Endothelial cell of umbilical vein (primary cell): ENCODE measurements at regions of chrX and their contacts with region 1.

Region 1: GRCh38 chrX:153032397-153033118 is 23.7 kb upstream of the PNMA3 start:
- DNase-seq: peak; percentile 56
- H3K4me3 ChIP-seq: peak overlapping the region in 2 of 3 experiments; percentile 20 to 27
- H3K27ac ChIP-seq: no peak overlapping the region
- H3K4me1 ChIP-seq: no peaks in the 10 kb centered on the region
- H3K27me3 ChIP-seq: no peaks in the 10 kb centered on the region
- CTCF ChIP-seq: peak; percentile 69 to 83
- POLR2A ChIP-seq: no peak

Region 2: DNA sequence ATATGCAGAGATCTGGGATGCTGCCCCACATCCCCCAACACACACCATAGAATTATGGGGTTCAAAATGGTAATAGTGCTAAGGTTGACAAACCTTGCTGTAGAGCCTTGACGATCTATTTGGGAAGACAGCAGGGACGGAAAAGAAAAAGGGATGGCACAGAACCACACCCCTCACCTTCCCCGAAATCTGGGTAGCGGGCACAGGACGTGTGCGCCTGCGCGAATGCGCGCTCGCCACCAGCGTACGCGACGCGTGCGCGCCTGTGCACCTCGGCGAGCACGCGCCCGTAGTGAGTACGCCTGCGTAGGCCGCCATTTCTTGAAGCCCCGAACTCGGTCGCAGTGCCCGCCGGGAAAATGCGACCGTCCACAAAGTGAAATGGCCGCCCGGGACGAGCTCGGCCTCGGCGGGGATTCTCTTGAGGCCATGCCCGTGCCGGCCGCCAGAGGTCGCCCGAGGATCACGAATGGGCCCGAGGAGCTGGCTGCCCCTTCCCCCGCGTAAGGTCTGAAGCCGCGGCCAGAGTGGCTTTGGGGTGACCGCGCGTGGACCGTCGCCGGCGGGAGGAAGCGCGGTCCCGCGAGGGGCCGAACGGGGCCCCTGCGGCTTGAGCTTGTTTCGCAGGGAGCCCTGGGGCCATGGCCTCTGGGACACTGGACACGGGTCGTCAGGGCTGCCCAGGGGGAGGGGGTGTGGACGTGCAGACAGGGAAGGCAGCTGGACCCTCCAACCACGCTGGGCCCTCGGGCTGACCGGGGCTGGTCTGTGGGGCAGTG is 91.0 kb before region 1 on chrX:
- CTCF ChIA-PET with region 1: interaction called, 14 read pairs
- POLR2A ChIA-PET with region 1: no interaction called
- dilution Hi-C with region 1: no loop called
- intact Hi-C with region 1: loop called (anchors 1 kb)
- DNase-seq: peak; percentile 91
- H3K4me3 ChIP-seq: peak overlapping the region; percentile 28 to 74 (median 62)
- H3K27ac ChIP-seq: peak overlapping the region; percentile 46
- H3K4me1 ChIP-seq: peaks cover 13% of the 10 kb centered on the region
- H3K27me3 ChIP-seq: no peaks in the 10 kb centered on the region
- CTCF ChIP-seq: peak; percentile 64 to 81
- POLR2A ChIP-seq: peak; percentile 75

Region 3: DNA sequence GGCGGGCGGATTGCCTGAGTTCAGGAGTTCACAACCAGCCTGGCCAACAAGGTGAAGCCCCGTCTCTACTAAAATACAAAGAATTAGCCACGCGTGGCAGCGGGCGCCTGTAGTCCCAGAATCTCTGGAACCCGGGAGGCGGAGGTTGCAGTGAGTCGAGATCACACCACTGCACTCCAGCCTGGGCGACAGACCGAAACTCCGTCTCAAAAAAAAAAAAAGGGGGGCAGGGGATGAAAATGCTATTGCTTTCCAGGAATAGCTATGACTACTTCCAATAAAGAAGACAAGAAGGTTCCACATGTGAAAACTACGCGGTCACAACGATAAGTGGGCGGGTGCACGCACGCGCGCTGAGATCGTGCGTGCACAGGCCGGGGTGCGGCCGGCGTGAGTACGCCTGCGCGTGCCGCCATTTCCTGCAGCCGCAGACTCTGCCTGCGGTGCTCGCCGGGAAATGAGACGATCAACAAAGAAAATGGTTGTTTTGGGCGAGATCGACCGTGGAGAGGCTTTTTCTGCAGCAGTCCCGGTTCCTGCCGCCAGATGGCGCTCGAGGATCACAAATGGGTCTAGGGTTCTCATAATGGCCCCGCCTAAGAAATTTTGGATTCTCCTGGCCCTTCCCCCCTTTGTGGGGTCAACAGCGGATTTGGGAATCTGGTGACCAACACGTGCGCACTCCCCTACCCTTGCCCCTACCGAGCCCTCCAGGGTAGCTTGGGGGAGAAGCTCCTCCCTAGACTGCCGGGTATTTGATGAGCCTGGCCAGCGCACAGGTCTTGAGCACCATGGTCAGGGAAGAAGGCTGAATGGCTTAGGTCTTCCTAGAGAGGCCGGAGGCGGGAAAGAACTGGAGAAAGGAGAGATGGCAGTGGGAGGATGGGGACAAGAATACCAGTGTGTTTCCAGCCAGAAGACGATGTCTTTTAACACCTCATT is 73.8 kb before region 1 on chrX:
- CTCF ChIA-PET with region 1: no interaction called
- POLR2A ChIA-PET with region 1: no interaction called
- dilution Hi-C with region 1: no loop called
- intact Hi-C with region 1: loop called (anchors 1 kb)
- DNase-seq: peak; percentile 89
- H3K4me3 ChIP-seq: peak overlapping the region in 1 of 3 experiments; percentile 9
- H3K27ac ChIP-seq: peak overlapping the region; percentile 9
- H3K4me1 ChIP-seq: no peaks in the 10 kb centered on the region
- H3K27me3 ChIP-seq: no peaks in the 10 kb centered on the region
- CTCF ChIP-seq: peak; percentile 70 to 71
- POLR2A ChIP-seq: peak; percentile 60

Region 4: DNA sequence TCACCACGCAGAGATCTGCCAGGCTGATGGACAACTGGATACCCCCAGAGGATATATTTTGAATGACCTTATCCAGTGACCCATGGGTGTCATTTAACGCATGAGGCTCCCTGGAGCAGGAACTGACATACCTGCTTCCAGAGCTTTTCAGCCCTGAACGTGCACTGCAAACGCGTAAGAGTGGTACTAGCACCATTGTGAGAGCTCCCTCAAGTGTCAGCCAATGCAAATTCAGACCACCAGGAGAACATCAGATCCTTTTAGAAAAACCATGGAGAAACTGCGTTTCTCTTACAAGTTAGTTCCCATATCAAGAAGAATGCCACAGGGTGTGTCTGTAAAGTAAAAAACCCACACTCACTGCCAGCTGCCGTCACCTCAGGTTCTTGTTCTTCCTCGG is 406.0 kb after region 1 on chrX:
- CTCF ChIA-PET with region 1: interaction called, 14 read pairs
- POLR2A ChIA-PET with region 1: no interaction called
- dilution Hi-C with region 1: no loop called
- intact Hi-C with region 1: loop called (anchors 10 kb)
- DNase-seq: peak; percentile 16
- H3K4me3 ChIP-seq: no peak overlapping the region
- H3K27ac ChIP-seq: no peak overlapping the region
- H3K4me1 ChIP-seq: no peaks in the 10 kb centered on the region
- H3K27me3 ChIP-seq: no peaks in the 10 kb centered on the region
- CTCF ChIP-seq: peak; percentile 5 to 16
- POLR2A ChIP-seq: no peak

Region 5: DNA sequence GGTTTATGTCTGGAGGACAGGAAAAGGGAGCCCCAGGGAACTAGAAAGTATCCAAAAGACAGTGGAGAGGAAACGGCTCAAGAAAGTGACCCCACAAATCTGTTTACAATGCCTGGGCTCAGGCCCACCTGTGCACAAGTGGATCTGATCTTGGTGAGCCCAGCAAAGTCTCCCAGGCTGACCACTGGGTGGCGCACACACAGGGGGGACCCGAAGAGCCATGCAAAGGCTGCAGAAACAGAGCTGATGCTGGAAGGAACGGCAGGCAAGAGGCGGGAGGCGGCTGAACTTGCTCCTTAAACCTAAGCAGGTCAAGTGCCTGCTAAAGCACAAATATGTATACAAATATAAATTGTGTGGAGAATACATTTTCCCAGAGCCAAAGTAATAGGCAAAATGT is 428.3 kb after region 1 on chrX:
- CTCF ChIA-PET with region 1: interaction called, 19 read pairs
- POLR2A ChIA-PET with region 1: no interaction called
- dilution Hi-C with region 1: no loop called
- intact Hi-C with region 1: loop called (anchors 1 kb)
- DNase-seq: peak; percentile 47
- H3K4me3 ChIP-seq: no peak overlapping the region
- H3K27ac ChIP-seq: peak overlapping the region; percentile 58
- H3K4me1 ChIP-seq: peaks cover 5% of the 10 kb centered on the region
- H3K27me3 ChIP-seq: no peaks in the 10 kb centered on the region
- CTCF ChIP-seq: peak; percentile 60 to 65
- POLR2A ChIP-seq: no peak